Right ventricle myocardium superior (tissue), 1 donor: ENCODE measurements at regions of chr15 and their contacts with region 1.

Region 1: GRCh38 chr15:69154684-69155083 is 5.8 kb upstream of the GLCE start:
- DNase-seq: no peak
- ATAC-seq: no peak

Region 2: GRCh38 chr15:69074843-69075224 is 79.8 kb before region 1 on chr15:
- intact Hi-C with region 1: loop called (anchors 5 kb)
- DNase-seq: no peak
- ATAC-seq: peak; percentile 27